Activated naive CD4-positive, alpha-beta T cell treated with anti-CD3 and anti-CD28 coated beads, Interleukin-2, amount 10 ng/mL, durations not matched to agents 7 days and 5 days (primary cell): ENCODE measurements at regions of chr11 and their contacts with region 1.

Region 1: DNA sequence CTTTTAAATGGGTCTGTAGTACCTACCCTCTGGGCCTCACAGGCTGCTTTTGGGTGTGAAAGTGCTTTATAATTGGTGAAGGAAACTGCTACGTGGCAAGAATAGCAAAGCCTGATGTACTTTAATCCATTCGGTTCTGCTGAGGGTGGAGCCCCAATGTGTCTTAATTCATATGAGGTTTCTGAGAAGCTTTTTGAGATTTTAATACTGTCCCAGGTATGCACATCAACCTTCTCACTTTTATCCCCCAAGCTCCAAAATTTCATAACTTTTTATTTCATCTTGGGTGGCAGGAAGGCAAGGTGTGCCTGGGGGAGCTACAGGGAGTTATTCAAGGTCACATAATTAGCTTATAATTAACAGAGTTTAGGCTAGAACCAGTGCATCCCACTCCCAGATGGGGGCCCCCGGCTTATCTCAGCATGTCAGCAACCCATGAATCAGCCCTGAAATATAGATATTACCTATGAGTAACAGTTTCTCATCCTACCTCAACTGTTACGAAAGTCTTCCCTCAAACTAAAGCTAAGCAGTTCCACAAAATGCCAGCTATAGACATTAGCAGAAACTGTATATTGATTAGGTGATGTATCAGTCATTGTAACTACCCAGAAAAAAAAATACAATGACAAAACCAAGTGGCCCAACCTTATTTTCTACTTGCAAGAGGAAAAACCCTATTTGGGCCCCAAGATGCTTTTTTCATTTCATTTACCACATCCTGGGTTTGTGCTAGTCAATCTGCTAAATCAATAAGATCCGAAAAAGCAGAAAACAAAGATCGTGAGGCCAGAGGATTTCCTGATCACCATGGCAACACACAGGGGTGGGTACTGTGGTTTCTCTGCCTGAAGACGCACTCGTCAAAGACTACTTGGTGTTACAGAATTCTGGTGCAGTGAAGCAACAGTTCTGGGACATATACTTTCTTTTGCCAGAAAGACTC is 26.7 kb downstream of the CD44 start:
- DNase-seq: peak; percentile 95
- H3K4me3 Mint-ChIP-seq: peak overlapping the region; percentile 57
- H3K27ac Mint-ChIP-seq: peak overlapping the region; percentile 99
- H3K4me1 Mint-ChIP-seq: peaks cover 100% of the 10 kb centered on the region
- H3K27me3 Mint-ChIP-seq: no peaks in the 10 kb centered on the region

Region 2: GRCh38 chr11:34806875-34807274 is 358.8 kb before region 1 on chr11:
- CTCF ChIA-PET with region 1: no interaction called
- DNase-seq: no peak
- H3K4me3 Mint-ChIP-seq: no peak overlapping the region
- H3K27ac Mint-ChIP-seq: no peak overlapping the region
- H3K4me1 Mint-ChIP-seq: peaks cover 8% of the 10 kb centered on the region
- H3K27me3 Mint-ChIP-seq: peaks cover 4% of the 10 kb centered on the region

Region 3: DNA sequence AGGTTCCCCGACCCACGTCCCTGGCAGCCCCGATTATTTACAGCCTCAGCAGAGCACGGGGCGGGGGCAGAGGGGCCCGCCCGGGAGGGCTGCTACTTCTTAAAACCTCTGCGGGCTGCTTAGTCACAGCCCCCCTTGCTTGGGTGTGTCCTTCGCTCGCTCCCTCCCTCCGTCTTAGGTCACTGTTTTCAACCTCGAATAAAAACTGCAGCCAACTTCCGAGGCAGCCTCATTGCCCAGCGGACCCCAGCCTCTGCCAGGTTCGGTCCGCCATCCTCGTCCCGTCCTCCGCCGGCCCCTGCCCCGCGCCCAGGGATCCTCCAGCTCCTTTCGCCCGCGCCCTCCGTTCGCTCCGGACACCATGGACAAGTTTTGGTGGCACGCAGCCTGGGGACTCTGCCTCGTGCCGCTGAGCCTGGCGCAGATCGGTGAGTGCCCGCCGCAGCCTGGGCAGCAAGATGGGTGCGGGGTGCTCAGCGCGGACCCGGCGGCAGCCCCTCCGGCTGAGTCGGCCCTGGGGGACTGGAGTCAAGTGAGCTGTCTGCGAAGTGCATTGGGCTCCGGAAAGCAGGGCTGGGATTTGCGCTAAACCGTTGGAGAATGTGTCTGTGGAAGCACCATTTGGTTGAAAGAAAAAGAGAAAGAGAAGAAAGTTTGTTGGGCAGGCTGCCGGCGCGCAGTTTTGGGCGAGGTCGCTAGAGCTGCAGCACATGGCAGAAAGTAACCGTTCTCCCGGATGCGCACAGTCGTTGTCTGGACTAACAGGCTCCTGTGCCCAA is 26.6 kb before region 1 on chr11 and contains the start of gene CD44:
- CTCF ChIA-PET with region 1: interaction called, 95 read pairs
- DNase-seq: peak; percentile 81
- H3K4me3 Mint-ChIP-seq: peak within 1 kb of the TSS; percentile 88
- H3K27ac Mint-ChIP-seq: peak within 1 kb of the TSS; percentile 94
- H3K4me1 Mint-ChIP-seq: peaks cover 48% of the 10 kb centered on the region
- H3K27me3 Mint-ChIP-seq: peaks cover 3% of the 10 kb centered on the region

Region 4: GRCh38 chr11:35145271-35145670 is 20.4 kb before region 1 on chr11:
- CTCF ChIA-PET with region 1: interaction called, 95 read pairs
- DNase-seq: no peak
- H3K4me3 Mint-ChIP-seq: peak overlapping the region; percentile 70
- H3K27ac Mint-ChIP-seq: peak overlapping the region; percentile 78
- H3K4me1 Mint-ChIP-seq: peaks cover 87% of the 10 kb centered on the region
- H3K27me3 Mint-ChIP-seq: no peaks in the 10 kb centered on the region

Region 5: DNA sequence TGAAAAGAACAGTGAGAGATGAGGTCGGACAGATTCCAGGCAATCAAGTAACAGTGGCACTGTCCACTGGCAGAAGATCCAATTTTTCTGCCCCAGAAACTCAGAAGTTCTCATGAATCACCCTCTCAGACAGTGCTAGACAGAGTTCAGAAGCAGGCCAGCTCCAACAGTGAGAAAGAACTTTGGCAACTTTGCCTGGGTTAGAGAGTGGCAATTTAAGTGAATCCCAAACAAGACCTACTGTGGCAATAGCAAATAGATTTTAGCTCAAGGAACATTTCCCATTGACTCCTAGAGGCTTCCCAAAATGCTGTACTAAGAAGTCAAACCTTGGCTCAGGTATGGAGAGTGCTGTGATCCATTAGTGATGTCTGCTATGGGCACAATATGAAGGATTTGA is 14.5 kb before region 1 on chr11:
- CTCF ChIA-PET with region 1: interaction called, 21 read pairs
- DNase-seq: no peak
- H3K4me3 Mint-ChIP-seq: no peak overlapping the region
- H3K27ac Mint-ChIP-seq: no peak overlapping the region
- H3K4me1 Mint-ChIP-seq: peaks cover 97% of the 10 kb centered on the region
- H3K27me3 Mint-ChIP-seq: no peaks in the 10 kb centered on the region

Region 6: DNA sequence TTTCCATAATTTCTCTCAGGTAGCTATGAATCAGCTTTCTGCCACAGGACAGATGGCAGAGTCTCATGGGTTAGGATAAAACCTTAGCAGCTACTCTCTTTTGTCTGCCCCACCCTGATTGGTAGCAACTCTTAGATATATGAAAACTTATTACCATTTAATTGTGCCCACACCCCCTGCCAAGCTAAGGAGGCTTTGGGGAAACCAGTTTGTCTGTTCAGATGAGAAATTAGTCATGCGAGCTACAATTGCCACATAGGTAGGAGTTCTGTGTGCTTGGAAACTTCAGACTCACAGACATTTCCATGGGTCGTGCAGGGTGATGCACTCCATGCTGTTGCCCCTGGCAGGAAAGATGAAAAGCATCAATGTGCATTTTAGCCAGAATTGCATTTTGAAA is 13.2 kb after region 1 on chr11:
- CTCF ChIA-PET with region 1: interaction called, 66 read pairs
- DNase-seq: no peak
- H3K4me3 Mint-ChIP-seq: no peak overlapping the region
- H3K27ac Mint-ChIP-seq: peak overlapping the region; percentile 90
- H3K4me1 Mint-ChIP-seq: peaks cover 91% of the 10 kb centered on the region
- H3K27me3 Mint-ChIP-seq: no peaks in the 10 kb centered on the region

Region 7: DNA sequence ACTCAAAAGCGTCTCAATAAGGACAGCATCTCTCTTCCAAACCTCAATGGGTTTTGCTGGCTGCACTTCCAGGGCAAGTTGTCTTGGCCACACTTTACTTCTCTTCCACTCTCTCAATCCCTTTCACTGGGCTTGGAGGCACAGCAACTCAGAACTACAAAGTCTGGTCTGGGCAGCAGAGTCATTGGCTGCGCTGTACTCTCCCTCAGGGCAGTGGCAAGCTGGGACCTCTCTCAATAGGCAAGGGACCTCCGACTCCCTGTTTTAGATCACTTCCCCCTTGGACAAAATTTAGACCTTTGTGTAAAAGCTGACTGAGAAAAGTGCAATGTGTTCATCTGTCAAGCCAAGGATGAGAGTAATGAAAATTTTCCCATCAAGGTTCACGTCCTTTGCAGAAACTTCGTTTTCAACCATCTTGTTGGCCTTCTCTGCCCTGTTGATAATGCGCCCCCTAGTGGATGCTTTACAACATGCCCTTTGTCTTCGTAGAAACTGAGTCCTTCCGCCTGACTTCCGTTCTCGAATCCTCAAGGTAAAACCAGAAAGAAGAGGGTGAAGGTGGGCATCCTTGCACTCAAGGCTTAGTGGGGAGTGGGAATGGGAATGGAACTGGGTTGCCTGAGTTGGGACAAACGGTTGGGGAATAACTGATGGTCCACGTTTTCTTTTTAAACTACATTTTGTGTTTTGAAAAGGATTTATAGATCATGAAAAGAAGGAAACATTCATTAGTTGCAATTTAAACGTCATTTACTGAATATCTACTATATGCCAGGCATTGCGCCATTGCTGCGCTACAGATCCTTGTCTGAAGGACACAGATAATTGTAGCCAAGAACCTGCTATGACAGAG is 72.4 kb after region 1 on chr11:
- CTCF ChIA-PET with region 1: interaction called, 23 read pairs
- DNase-seq: peak; percentile 58
- H3K4me3 Mint-ChIP-seq: no peak overlapping the region
- H3K27ac Mint-ChIP-seq: no peak overlapping the region
- H3K4me1 Mint-ChIP-seq: peaks cover 78% of the 10 kb centered on the region
- H3K27me3 Mint-ChIP-seq: peaks cover 14% of the 10 kb centered on the region